ENCODE measurements at regions of chr16 and their contacts with region 1.

Region 1: GRCh38 chr16:84970447-84971127 is 40.7 kb downstream of the ZDHHC7 start:
- DNase-seq: peak; percentile 64
- H3K4me3 ChIP-seq: no peak overlapping the region
- H3K27ac ChIP-seq: no peak overlapping the region
- H3K27me3 ChIP-seq: no peaks in the 10 kb centered on the region
- CTCF ChIP-seq: peak; percentile 85

Region 2: GRCh38 chr16:84390131-84390785 is 580.3 kb before region 1 on chr16:
- CTCF ChIA-PET with region 1: no interaction called
- POLR2A ChIA-PET with region 1: no interaction called
- DNase-seq: no peak
- H3K4me3 ChIP-seq: no peak overlapping the region
- H3K27ac ChIP-seq: no peak overlapping the region
- H3K27me3 ChIP-seq: peaks cover 4% of the 10 kb centered on the region
- CTCF ChIP-seq: no peak

Region 3: DNA sequence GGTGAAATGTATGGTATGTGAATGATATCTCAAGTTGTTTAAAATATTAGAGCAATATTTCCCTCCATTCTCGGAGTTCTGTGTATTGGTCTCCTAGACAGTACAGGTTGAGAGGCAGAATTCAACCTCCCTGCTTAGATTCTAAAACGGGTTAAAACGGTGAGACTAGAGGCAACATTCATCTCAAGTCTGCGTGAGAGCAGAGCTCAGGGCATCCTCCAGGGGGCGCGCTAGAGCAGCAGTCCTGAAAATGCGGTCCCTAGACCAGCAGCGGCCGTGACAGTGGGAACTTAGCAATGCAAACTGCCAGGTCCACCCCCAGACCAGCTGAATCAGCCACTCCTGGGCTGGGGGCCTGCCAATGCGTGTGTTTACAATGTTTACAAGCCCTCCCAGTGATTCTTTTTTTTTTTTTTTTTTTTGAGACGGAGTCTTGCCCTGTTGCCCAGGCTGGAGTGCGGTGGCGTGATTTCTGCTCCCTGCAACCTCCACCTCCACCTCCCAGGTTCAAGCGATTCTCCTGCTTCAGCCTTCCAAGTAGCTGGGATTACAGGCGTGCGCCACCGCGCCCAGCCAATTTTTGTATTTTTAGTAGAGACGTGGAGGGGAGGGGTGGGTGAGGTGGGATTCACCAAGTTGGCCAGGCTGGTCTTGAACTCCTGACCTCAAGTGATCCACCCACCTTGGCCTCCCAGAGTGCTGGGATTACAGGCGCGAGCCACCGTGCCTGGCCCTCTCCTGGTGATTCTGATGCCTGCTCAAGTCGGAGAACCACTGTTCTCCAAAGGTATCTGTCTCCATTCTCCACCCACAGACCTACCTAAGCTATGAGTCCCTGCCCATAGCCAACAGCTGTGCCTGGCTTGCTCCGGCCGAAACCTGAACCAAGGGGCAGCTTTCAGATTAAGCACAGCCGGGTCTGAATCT is 298.0 kb before region 1 on chr16:
- CTCF ChIA-PET with region 1: interaction called, 11 read pairs
- POLR2A ChIA-PET with region 1: no interaction called
- DNase-seq: peak; percentile 29
- H3K4me3 ChIP-seq: no peak overlapping the region
- H3K27ac ChIP-seq: no peak overlapping the region
- H3K27me3 ChIP-seq: no peaks in the 10 kb centered on the region
- CTCF ChIP-seq: peak; percentile 89

Region 4: GRCh38 chr16:84738255-84739038 is 232.1 kb before region 1 on chr16:
- CTCF ChIA-PET with region 1: interaction called, 99 read pairs
- POLR2A ChIA-PET with region 1: no interaction called
- DNase-seq: peak; percentile 26
- H3K4me3 ChIP-seq: no peak overlapping the region
- H3K27ac ChIP-seq: no peak overlapping the region
- H3K27me3 ChIP-seq: no peaks in the 10 kb centered on the region
- CTCF ChIP-seq: peak; percentile 84

Region 5: GRCh38 chr16:84907575-84907974 is 63.0 kb before region 1 on chr16:
- CTCF ChIA-PET with region 1: interaction called, 17 read pairs
- POLR2A ChIA-PET with region 1: no interaction called
- DNase-seq: no peak
- H3K4me3 ChIP-seq: no peak overlapping the region
- H3K27ac ChIP-seq: no peak overlapping the region
- H3K27me3 ChIP-seq: no peaks in the 10 kb centered on the region
- CTCF ChIP-seq: no peak

Region 6: GRCh38 chr16:84925092-84925772 is 45.4 kb before region 1 on chr16:
- CTCF ChIA-PET with region 1: interaction called, 14 read pairs
- POLR2A ChIA-PET with region 1: no interaction called
- DNase-seq: no peak
- H3K4me3 ChIP-seq: no peak overlapping the region
- H3K27ac ChIP-seq: no peak overlapping the region
- H3K27me3 ChIP-seq: no peaks in the 10 kb centered on the region
- CTCF ChIP-seq: peak; percentile 73

Region 7: DNA sequence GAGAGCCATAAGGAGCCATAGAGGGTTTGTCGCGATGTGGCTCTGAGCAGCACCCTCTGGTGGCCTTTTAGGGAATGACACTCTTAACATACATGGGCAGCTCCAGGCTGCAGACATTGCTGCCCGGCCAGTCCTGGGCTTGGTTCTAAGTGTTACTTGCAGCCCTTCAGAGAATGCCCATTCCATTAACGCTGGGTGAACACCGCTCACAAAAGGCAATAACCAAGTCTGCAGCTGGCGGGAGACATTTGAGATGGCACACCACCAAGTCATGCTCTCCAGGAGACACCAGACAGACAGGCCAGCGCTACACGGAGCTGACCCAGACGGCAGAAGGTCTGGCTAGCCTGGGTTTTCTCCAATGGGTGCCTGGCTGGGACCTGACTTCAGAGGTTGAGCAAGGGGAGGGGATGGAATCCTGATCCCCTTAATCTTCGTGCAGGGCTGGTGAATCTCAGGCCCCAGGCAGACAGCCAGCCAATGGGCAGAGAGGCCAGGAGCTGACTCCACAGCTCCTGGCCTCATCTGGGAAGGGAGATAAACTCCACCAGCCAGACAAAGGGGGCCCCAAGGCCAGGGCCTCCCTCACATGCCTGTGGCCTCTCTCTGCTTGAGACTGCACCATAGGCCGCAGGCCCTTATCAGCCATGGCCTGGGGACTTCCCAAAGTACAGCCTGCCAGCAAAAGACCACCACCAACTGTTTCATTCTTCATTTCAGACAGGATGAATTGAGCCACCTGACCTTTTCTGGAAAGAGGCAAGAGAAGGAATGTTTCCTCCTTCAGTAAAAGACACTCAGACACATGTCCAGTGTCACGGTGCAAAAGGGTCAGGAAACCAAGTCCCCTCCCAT is 18.0 kb before region 1 on chr16:
- CTCF ChIA-PET with region 1: interaction called, 54 read pairs
- POLR2A ChIA-PET with region 1: no interaction called
- DNase-seq: peak; percentile 66
- H3K4me3 ChIP-seq: no peak overlapping the region
- H3K27ac ChIP-seq: no peak overlapping the region
- H3K27me3 ChIP-seq: no peaks in the 10 kb centered on the region
- CTCF ChIP-seq: peak; percentile 90

Region 8: DNA sequence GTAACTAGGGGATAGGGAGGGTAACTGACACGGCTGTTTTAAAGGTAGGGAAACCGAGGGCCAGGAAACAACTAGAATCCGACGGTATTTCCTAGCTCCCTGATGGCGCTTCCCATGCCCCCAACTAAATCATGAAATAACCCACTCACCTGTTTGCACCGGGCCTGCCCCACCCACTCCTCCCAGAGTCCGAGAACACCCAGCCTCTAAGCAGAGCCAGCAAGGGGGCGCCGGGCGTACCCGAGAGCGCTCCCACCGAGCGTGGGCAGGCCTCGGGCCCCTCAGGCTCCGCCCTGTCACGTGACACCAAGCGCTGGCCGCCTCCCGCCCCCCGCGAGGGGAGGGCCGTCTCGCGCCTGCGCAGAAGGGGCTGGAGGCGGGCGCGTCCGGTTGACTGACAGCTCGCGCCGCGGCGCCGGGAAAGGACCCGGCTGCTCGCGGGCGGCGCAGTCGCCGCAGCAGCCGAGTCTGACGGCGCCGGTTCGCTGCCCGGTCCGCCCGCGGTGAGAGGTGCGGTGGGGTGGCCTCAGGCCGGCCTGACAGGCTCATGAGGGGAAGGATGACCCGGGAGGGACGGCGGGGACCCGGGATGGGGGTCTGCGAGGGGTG is 56.9 kb after region 1 on chr16 and contains the start of gene KIAA0513:
- CTCF ChIA-PET with region 1: interaction called, 13 read pairs
- POLR2A ChIA-PET with region 1: interaction called, 3 read pairs
- DNase-seq: peak; percentile 84
- H3K4me3 ChIP-seq: peak within 1 kb of the TSS; percentile 82
- H3K27ac ChIP-seq: peak within 1 kb of the TSS; percentile 65
- H3K27me3 ChIP-seq: no peaks in the 10 kb centered on the region
- CTCF ChIP-seq: peak; percentile 42
- polyA plus RNA-seq, gene KIAA0513: 10.0 and 10.1 TPM in 2 replicates